ENCODE measurements at regions of chr13 and their contacts with region 1.

Region 1: GRCh38 chr13:24671386-24672107 is 8.7 kb upstream of the ATP12A start:
- DNase-seq: no peak
- H3K4me3 Mint-ChIP-seq: no peak overlapping the region
- H3K27ac Mint-ChIP-seq: no peak overlapping the region
- H3K4me1 Mint-ChIP-seq: peaks cover 10% of the 10 kb centered on the region
- H3K27me3 Mint-ChIP-seq: peaks cover 59% of the 10 kb centered on the region

Region 2: DNA sequence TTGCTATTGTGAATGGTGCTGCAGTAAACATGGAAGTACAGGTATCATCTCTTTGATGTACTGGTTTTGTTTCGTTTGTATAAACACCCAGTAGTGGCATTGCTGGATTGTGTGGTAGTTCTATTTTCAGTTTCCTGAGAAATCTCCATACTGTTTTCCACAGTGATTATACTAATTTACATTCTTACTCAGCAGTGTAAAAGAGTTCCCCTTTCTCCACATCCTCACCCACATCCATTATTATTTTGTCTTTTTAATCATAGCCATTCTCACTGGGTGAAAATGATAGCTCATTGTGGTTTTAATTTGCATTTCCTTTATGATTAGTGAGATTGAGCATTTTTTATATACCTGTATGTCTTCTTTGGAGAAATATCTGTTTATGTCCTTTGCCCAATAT is 96.7 kb before region 1 on chr13:
- CTCF ChIA-PET with region 1: interaction called, 11 read pairs
- DNase-seq: no peak
- H3K4me3 Mint-ChIP-seq: no peak overlapping the region
- H3K27ac Mint-ChIP-seq: no peak overlapping the region
- H3K4me1 Mint-ChIP-seq: peaks cover 3% of the 10 kb centered on the region
- H3K27me3 Mint-ChIP-seq: peaks cover 4% of the 10 kb centered on the region

Region 3: DNA sequence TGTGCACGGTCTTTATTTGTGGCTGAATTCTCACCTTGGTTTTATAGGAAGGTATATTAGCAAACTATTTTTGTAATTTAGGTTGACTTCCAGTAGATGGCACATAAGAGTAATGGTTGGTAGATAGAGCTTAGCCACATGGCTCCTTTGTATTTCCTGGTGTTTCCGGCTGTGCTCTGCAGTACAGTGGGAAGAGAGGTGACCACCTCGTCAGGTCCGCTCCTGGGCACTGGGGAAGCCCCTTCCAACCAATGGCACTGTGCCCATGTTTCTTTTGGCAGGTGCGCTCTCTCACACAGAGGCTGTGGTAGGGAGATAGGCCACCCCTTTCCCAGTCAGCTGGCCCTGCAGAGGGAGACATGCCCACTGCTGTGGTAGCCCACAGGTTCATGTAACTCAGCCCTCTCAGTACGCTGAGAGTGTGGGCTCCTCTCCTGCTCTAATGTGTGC is 65.6 kb before region 1 on chr13:
- CTCF ChIA-PET with region 1: interaction called, 44 read pairs
- DNase-seq: no peak
- H3K4me3 Mint-ChIP-seq: no peak overlapping the region
- H3K27ac Mint-ChIP-seq: peak overlapping the region; percentile 13
- H3K4me1 Mint-ChIP-seq: peaks cover 5% of the 10 kb centered on the region
- H3K27me3 Mint-ChIP-seq: no peaks in the 10 kb centered on the region

Region 4: GRCh38 chr13:25037057-25037813 is 365.7 kb after region 1 on chr13:
- CTCF ChIA-PET with region 1: no interaction called
- DNase-seq: peak; percentile 70
- H3K4me3 Mint-ChIP-seq: no peak overlapping the region
- H3K27ac Mint-ChIP-seq: no peak overlapping the region
- H3K4me1 Mint-ChIP-seq: no peaks in the 10 kb centered on the region
- H3K27me3 Mint-ChIP-seq: peaks cover 36% of the 10 kb centered on the region

Measured in activated naive CD4-positive, alpha-beta T cell treated with anti-CD3 and anti-CD28 coated beads, Interleukin-2, amount 10 ng/mL, durations not matched to agents 7 days and 5 days (primary cell).